K562 (cell line): ENCODE measurements at regions of chr11 and their contacts with region 1.

Region 1: GRCh38 chr11:57424792-57425564 is 1.9 kb downstream of the SLC43A3 start:
- DNase-seq: peak; percentile 72 to 98 (median 82)
- ATAC-seq: peak; percentile 90
- H3K4me3 ChIP-seq: peak overlapping the region; percentile 72
- H3K27ac ChIP-seq: peak overlapping the region; percentile 91
- H3K4me1 ChIP-seq: peaks cover 42 to 48% of the 10 kb centered on the region in 2 experiments
- H3K27me3 ChIP-seq: no peaks in the 10 kb centered on the region
- CTCF ChIP-seq: no peak
- EP300 ChIP-seq: peak; percentile 94
- POLR2A ChIP-seq: peak; percentile 75
- RAD21 ChIP-seq: peak in 1 of 2 experiments; percentile 21; a peak in 1 of 4 replicates

Region 2: GRCh38 chr11:57387289-57388030 is 37.5 kb before region 1 on chr11:
- CTCF ChIA-PET with region 1: no interaction called
- POLR2A ChIA-PET with region 1: no interaction called
- in situ Hi-C with region 1: no loop called
- intact Hi-C with region 1: loop called (anchors 2 kb)
- DNase-seq: peak in 3 of 4 experiments; percentile 34 to 40 (median 39)
- ATAC-seq: peak; percentile 64
- H3K4me3 ChIP-seq: no peak overlapping the region
- H3K27ac ChIP-seq: no peak overlapping the region
- H3K4me1 ChIP-seq: peaks cover 37 to 65% of the 10 kb centered on the region in 2 experiments
- H3K27me3 ChIP-seq: no peaks in the 10 kb centered on the region
- CTCF ChIP-seq: peak in 2 of 3 experiments; percentile 35 to 42; a peak in 2 of 6 replicates
- EP300 ChIP-seq: no peak
- POLR2A ChIP-seq: no peak
- RAD21 ChIP-seq: peak in 1 of 2 experiments; percentile 48; a peak in 3 of 4 replicates

Region 3: GRCh38 chr11:58866788-58867187 is 1441.8 kb after region 1 on chr11:
- CTCF ChIA-PET with region 1: no interaction called
- POLR2A ChIA-PET with region 1: no interaction called
- in situ Hi-C with region 1: no loop called
- intact Hi-C with region 1: no loop called
- DNase-seq: no peak
- ATAC-seq: no peak
- H3K4me3 ChIP-seq: no peak overlapping the region
- H3K27ac ChIP-seq: no peak overlapping the region
- H3K4me1 ChIP-seq: no peaks in the 10 kb centered on the region
- H3K27me3 ChIP-seq: no peaks in the 10 kb centered on the region
- CTCF ChIP-seq: no peak
- EP300 ChIP-seq: no peak
- POLR2A ChIP-seq: no peak
- RAD21 ChIP-seq: no peak